ENCODE measurements at regions of chr1 and their contacts with region 1.

Region 1: DNA sequence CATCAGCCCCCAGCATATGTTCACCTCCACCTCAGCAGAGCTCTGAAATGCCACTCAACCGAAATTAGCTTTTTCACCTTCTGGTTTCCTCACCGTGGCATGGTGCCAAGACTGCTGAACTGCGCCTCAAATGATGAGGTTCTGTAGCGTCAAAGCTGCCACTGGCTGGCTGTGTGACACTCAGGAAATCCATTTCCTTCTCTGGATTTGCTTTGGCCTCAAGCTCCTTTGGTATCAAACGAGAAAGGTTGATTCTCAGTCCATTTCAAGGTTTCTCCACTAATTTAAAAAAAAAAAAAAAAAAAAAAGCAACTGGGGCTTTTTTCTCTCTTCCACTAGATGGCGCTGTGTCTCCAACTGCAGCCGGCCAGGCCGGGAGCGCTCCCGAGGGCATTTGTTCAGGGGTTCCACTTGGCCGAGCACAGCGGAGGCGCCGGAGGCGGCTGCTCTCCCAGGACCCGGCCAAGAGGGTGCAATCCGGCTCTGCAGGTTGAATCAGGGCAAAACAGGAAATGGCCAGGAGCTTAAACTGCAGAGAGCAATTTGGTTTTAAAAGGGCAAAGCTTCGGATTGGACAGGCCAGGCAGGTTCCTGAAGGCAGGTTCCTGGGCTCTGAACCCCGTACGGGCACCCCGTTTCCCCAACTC is 26.5 kb upstream of the PLA2G2C start:
- DNase-seq: peak; percentile 57
- H3K4me3 ChIP-seq: no peak overlapping the region
- H3K27ac ChIP-seq: no peak overlapping the region
- H3K4me1 ChIP-seq: no peaks in the 10 kb centered on the region
- H3K27me3 ChIP-seq: no peaks in the 10 kb centered on the region
- CTCF ChIP-seq: peak; percentile 54 to 79 (median 56)
- POLR2A ChIP-seq: no peak

Region 2: DNA sequence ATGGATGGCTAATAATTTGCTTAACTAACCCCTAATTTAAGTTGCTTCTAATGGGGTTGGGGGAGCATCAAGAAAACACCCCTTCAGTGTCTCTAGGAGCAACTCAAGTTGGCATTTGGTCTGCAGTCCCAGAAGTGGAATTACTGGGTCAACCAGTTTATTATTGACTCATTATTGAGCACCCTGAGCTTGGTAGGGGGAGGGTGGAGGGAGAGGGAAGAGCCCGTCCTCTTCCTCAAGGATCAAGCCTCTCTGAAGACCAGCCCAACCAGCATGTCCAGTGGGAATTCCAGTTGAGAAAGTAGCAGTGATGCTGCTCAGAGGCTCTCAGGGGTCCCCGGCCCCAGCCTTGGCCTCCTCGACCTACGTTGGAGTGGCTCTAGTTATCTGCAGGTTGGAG is 75.8 kb before region 1 on chr1:
- intact Hi-C with region 1: no loop called
- DNase-seq: peak; percentile 63
- H3K4me3 ChIP-seq: no peak overlapping the region
- H3K27ac ChIP-seq: no peak overlapping the region
- H3K4me1 ChIP-seq: peaks cover 6% of the 10 kb centered on the region
- H3K27me3 ChIP-seq: no peaks in the 10 kb centered on the region
- CTCF ChIP-seq: no peak
- POLR2A ChIP-seq: no peak

Region 3: DNA sequence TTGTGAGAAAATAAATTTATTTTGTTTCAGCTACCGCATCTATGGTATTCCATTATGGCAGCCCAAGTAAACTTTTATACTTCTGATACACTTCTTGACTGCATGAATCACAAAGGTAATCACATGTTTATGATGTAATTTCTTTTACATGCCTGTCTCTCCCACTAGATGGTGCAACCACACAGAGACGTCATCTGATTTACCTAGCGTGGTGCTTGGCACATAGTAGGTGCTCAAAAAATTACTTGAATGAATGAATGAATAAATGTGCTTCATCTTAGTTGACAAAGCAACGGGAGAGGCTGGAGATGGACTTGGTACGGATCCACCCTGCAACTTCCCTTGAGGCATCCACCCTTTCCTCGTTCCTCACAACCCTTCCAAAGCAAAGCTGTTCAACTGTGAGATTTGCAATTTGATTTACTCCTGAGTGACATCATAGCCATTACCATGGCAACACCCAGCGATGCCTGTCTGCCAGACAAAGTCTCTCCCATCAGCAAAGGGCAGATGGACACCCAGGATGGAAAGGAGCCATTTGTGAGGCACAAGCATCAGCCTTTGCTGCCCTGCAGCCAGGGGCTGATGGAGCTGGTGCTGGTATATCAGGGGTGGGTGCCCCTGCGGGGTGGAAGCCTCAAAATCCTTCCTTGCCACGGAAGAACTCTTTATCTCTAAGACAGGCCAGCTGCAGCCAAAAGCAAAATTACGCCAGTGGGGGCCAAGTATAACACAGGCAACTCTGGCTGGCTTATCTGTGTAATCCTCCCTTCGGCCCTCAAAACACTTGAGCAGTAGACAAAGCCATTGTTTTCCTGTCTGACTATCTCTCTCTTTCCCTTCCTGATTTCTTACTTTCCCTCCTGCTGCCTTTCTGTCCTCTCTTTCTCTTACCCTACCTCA is 58.9 kb after region 1 on chr1:
- intact Hi-C with region 1: no loop called
- DNase-seq: no peak
- H3K4me3 ChIP-seq: no peak overlapping the region
- H3K27ac ChIP-seq: no peak overlapping the region
- H3K4me1 ChIP-seq: no peaks in the 10 kb centered on the region
- H3K27me3 ChIP-seq: no peaks in the 10 kb centered on the region
- CTCF ChIP-seq: no peak
- POLR2A ChIP-seq: no peak

Region 4: DNA sequence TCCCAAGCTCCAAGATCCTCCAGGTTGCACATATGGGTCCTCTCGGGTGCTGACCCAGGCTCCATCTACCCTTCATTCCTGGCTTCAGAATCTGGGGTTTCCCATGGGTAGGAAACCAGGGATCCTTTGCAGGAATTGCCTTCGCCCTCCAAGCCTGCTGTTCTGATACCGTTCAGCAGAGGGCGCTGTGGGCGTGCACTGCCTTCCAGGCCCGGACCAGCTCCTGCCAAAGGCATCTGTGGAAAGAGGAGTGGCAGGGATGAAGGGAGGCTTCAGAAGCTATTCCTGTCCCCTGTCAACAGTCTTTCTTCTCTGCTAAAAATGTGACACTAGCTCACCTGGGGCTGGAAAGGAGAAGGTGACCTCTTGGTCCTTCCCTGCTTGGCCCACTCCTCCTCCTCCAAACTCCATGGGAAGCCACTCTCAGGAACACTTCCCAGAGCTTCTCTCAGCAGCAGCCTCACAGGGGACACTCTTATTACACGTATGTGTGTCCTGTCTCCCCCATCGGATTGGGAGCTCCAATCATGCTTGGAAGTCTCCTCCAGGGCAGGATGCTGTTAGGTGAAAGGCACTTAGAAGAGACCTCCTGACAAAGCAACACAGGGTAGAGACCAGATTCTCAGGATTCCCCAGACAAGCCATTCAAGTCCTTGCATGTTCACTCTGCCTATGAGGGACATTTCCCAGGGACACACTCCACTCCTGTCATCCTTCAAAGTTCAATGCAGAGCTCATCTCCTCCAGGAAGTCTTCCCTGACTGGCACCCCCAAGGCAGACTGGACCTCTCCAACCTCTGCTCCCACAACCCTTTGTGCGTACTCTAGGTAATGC is 149.2 kb after region 1 on chr1:
- intact Hi-C with region 1: loop called (anchors 10 kb)
- DNase-seq: no peak
- H3K4me3 ChIP-seq: no peak overlapping the region
- H3K27ac ChIP-seq: no peak overlapping the region
- H3K4me1 ChIP-seq: peaks cover 11% of the 10 kb centered on the region
- H3K27me3 ChIP-seq: no peaks in the 10 kb centered on the region
- CTCF ChIP-seq: peak; percentile 34 to 59 (median 55)
- POLR2A ChIP-seq: no peak

Region 5: DNA sequence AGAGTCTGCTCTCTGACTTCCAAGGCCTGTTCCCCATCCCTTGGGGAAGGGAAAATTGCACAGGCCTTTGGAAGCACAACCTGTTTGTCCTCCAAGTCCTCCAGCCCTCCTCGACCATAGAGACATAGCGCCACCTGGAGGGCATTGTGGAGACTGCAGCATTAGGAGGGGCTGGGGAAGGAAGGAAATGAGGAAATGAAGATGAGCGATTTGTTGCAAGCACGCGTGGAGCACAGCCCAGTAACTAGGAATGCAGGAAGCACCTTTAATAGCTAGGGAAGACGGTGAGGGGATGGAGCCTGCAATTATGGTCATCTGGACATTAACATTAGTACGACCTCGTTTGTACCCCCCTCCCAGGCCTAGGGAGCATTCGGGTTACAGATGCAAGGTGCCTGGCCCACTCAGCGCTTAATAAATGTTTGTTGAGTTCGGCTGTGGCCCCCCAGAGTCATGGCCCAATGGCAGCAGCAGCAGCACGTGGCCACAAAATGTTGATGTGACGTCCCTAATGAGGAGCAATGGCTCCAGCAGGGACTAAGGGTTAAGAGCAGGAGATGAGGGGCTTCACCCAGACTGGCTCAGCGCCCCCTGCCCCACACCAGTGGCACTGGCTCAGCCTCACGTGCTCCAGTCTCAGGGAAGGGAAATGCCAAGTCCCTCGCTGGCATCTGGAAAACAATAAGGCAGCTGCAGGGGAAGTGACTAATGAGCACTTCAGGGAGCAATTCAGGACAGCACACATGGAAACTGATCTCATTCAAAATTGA is 281.2 kb after region 1 on chr1:
- intact Hi-C with region 1: loop called (anchors 2 kb)
- DNase-seq: peak; percentile 74
- H3K4me3 ChIP-seq: no peak overlapping the region
- H3K27ac ChIP-seq: no peak overlapping the region
- H3K4me1 ChIP-seq: no peaks in the 10 kb centered on the region
- H3K27me3 ChIP-seq: no peaks in the 10 kb centered on the region
- CTCF ChIP-seq: peak; percentile 96 to 99 (median 98)
- POLR2A ChIP-seq: no peak